GM10248 (cell line): ENCODE measurements at regions of chr20 and their contacts with region 1.

Region 1: GRCh38 chr20:41339507-41340326 is 904 bp upstream of the LPIN3 start:
- DNase-seq: peak; percentile 88
- CTCF ChIP-seq: peak; percentile 98

Region 2: GRCh38 chr20:39489986-39490560 is 1849.6 kb before region 1 on chr20:
- CTCF ChIA-PET with region 1: no interaction called
- POLR2A ChIA-PET with region 1: no interaction called
- DNase-seq: no peak
- CTCF ChIP-seq: no peak

Region 3: DNA sequence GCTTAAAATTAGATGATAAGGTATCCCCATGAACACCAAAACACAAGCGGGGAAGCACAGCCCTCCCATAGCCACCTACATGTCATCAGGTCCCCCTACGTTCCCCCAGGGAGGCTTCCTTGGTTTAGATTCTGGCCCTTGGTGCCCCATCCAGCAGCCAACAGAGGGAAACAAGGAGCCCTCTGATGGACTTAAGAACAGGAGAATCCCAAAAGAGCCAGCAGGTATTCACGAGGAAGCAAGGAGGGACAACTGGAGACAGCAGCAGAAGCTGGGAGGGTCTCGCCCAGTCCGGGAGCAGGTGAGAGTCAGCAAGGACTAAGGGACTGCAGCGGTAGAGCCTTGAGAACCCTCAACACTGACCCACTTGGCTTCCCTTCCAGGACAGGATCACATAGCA is 369.5 kb before region 1 on chr20:
- CTCF ChIA-PET with region 1: interaction called, 34 read pairs
- POLR2A ChIA-PET with region 1: no interaction called
- DNase-seq: no peak
- CTCF ChIP-seq: peak; percentile 23

Region 4: GRCh38 chr20:41149679-41150131 is 190.0 kb before region 1 on chr20:
- CTCF ChIA-PET with region 1: interaction called, 30 read pairs
- POLR2A ChIA-PET with region 1: no interaction called
- DNase-seq: no peak
- CTCF ChIP-seq: no peak

Region 5: GRCh38 chr20:41173161-41173721 is 166.5 kb before region 1 on chr20:
- CTCF ChIA-PET with region 1: interaction called, 133 read pairs
- POLR2A ChIA-PET with region 1: no interaction called
- DNase-seq: peak; percentile 81
- CTCF ChIP-seq: peak; percentile 94

Region 6: GRCh38 chr20:41308290-41308711 is 31.4 kb before region 1 on chr20:
- CTCF ChIA-PET with region 1: interaction called, 15 read pairs
- POLR2A ChIA-PET with region 1: no interaction called
- DNase-seq: no peak
- CTCF ChIP-seq: no peak

Region 7: DNA sequence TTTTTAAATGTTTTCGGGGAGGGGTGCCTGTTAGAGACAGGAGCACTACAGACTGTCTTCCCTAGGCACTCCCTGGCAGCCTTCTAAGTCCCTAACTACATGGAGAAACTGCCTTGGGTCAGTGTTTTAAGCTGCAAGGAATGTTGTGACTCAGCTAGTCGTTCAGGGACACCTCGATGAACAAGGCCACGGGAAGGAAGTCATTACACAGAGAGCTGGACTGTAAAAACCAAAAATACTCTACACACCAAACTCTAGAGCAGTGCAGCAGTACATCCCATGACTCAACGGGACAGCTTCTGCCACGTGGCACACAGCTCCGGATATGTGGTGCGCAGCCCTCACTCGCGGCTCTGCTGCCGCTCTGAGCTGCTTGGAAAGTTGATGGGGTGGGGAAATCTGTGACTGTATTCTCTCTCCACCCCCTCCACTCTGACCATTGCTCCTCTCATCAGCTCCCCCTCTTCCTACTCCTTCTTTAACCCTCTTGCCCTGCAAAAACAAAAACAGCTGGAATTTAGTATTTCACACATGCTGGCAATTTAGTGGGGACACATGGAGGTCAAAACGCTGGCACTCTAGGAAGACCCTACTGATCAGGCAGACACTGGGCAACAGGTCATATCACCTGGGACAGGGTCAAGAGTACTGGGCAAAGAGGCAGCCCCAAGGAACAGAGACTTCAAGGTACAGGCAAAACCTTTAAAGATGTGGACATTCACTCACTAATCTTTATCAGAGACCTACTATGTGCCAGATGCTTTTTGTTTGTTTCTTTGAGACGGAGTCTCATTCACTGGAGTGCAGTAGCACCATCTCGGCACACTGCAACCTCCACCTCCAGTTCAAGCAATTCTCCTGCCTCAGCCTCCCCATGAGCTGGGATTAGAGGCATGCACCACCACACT is 10.0 kb before region 1 on chr20:
- CTCF ChIA-PET with region 1: interaction called, 40 read pairs
- POLR2A ChIA-PET with region 1: no interaction called
- DNase-seq: peak; percentile 68
- CTCF ChIP-seq: no peak